ENCODE measurements at regions of chr3 and their contacts with region 1.

Region 1: GRCh38 chr3:102741108-102741507 is 306.3 kb downstream of the ZPLD1 start:
- DNase-seq: no peak
- H3K4me3 Mint-ChIP-seq: no peak overlapping the region
- H3K27ac Mint-ChIP-seq: no peak overlapping the region
- H3K4me1 Mint-ChIP-seq: no peaks in the 10 kb centered on the region
- H3K27me3 Mint-ChIP-seq: no peaks in the 10 kb centered on the region

Region 2: GRCh38 chr3:102512734-102513518 is 228.2 kb before region 1 on chr3:
- CTCF ChIA-PET with region 1: no interaction called
- intact Hi-C with region 1: no loop called
- DNase-seq: no peak
- H3K4me3 Mint-ChIP-seq: no peak overlapping the region
- H3K27ac Mint-ChIP-seq: no peak overlapping the region
- H3K4me1 Mint-ChIP-seq: no peaks in the 10 kb centered on the region
- H3K27me3 Mint-ChIP-seq: peaks cover 3% of the 10 kb centered on the region

Region 3: GRCh38 chr3:102673271-102674115 is 67.6 kb before region 1 on chr3:
- CTCF ChIA-PET with region 1: interaction called, 15 read pairs
- intact Hi-C with region 1: loop called (anchors 2 kb)
- DNase-seq: peak; percentile 82
- H3K4me3 Mint-ChIP-seq: no peak overlapping the region
- H3K27ac Mint-ChIP-seq: no peak overlapping the region
- H3K4me1 Mint-ChIP-seq: peaks cover 4% of the 10 kb centered on the region
- H3K27me3 Mint-ChIP-seq: peaks cover 20% of the 10 kb centered on the region